HCT116 (cell line): ENCODE measurements at regions of chr14 and their contacts with region 1.

Region 1: GRCh38 chr14:75577729-75578101 is 705 bp upstream of the FLVCR2 start:
- DNase-seq: peak; percentile 65
- ATAC-seq: peak; percentile 94
- H3K4me3 ChIP-seq: peak overlapping the region; percentile 50 to 65
- H3K27ac ChIP-seq: 0 out of 2 replicates have a peak overlapping the region, but pooled peaks have one; percentile 4
- H3K4me1 ChIP-seq: peaks cover 9 to 19% of the 10 kb centered on the region in 2 experiments; a peak in 3 of 4 replicates
- H3K27me3 ChIP-seq: 0 out of 2 replicates have a peak, but pooled peaks cover 7% of the 10 kb centered on the region
- CTCF ChIP-seq: peak; percentile 71 to 78 (median 78)
- POLR2A ChIP-seq: no peak
- RAD21 ChIP-seq: peak; percentile 87

Region 2: GRCh38 chr14:75560962-75561432 is 16.7 kb before region 1 on chr14:
- CTCF ChIA-PET with region 1: interaction called, 15 read pairs
- POLR2A ChIA-PET with region 1: no interaction called
- RAD21 ChIA-PET with region 1: interaction called in 1 of 2 experiments, 3 read pairs
- intact Hi-C with region 1: no loop called
- DNase-seq: peak; percentile 63
- ATAC-seq: peak; percentile 99
- H3K4me3 ChIP-seq: no peak overlapping the region
- H3K27ac ChIP-seq: no peak overlapping the region
- H3K4me1 ChIP-seq: peaks cover 8 to 14% of the 10 kb centered on the region in 2 experiments; a peak in 3 of 4 replicates
- H3K27me3 ChIP-seq: no peaks in the 10 kb centered on the region
- CTCF ChIP-seq: peak; percentile 78 to 89 (median 89)
- POLR2A ChIP-seq: no peak
- RAD21 ChIP-seq: peak; percentile 87

Region 3: GRCh38 chr14:75654127-75654732 is 76.5 kb after region 1 on chr14:
- CTCF ChIA-PET with region 1: interaction called, 84 read pairs
- POLR2A ChIA-PET with region 1: interaction called, 4 read pairs
- RAD21 ChIA-PET with region 1: interaction called, 9 read pairs
- intact Hi-C with region 1: loop called (anchors 1 kb)
- DNase-seq: peak; percentile 44
- ATAC-seq: peak; percentile 99
- H3K4me3 ChIP-seq: no peak overlapping the region
- H3K27ac ChIP-seq: no peak overlapping the region
- H3K4me1 ChIP-seq: peaks cover 0 to 5% of the 10 kb centered on the region in 2 experiments; a peak in 2 of 4 replicates
- H3K27me3 ChIP-seq: no peaks in the 10 kb centered on the region
- CTCF ChIP-seq: peak; percentile 85 to 99 (median 97)
- POLR2A ChIP-seq: no peak
- RAD21 ChIP-seq: peak; percentile 85

Region 4: DNA sequence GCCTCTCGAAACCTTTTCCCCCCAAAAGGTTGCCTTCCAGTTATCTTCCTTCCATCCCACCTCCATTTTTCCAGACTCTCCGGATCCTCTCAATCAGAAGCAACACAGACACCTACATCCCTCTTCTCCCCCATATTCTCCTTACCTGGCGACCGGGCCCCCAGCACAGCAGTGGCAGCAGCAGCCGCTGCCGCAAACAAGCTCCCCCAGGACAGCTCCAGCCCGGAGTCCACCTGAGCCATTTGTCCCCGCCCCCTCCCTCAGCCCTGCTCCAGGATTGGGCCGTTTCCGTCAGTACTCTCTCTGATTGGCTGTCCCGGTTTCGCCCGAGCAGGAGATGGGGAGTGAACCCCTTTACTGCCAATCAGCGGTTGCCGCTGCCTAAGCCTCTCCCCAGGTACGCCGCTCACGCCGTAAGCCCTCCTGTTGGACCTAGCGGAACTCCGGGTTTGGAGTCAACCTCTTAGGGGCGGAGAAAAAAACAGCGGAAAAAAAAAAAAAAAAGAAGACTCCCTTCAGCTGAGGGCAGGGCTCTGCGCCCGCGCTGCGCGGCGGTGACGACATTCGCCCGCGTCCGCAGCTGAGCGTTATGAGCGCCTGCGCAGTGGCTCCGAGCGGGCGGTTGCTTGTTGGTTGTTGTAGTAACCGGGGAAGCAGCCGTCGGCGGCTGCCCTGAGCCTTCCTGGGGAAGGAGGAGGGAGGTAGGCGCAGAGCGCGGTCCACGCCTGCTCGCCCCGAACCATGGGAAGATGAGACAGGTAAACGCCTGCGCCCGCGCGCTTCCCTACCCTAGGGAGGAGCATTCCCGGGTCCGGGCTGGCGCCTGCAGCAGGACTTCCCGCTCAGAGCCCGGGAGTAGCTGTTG is 83.1 kb after region 1 on chr14 and contains the starts of genes ERG28 and TTLL5:
- CTCF ChIA-PET with region 1: interaction called, 84 read pairs
- POLR2A ChIA-PET with region 1: no interaction called
- RAD21 ChIA-PET with region 1: interaction called, 3 to 6 read pairs
- intact Hi-C with region 1: no loop called
- DNase-seq: peak; percentile 99
- ATAC-seq: peak; percentile 97
- H3K4me3 ChIP-seq: peak within 1 kb of the TSS; percentile 82 to 91
- H3K27ac ChIP-seq: peak within 1 kb of the TSS; percentile 74
- H3K4me1 ChIP-seq: peaks cover 3 to 10% of the 10 kb centered on the region in 2 experiments; a peak in 2 of 4 replicates
- H3K27me3 ChIP-seq: no peaks in the 10 kb centered on the region
- CTCF ChIP-seq: no peak
- POLR2A ChIP-seq: peak; percentile 61
- RAD21 ChIP-seq: no peak
- total RNA-seq, gene ERG28: 18.4 TPM
- total RNA-seq, gene TTLL5: 26.2 TPM

Region 5: GRCh38 chr14:75709207-75709812 is 131.6 kb after region 1 on chr14:
- CTCF ChIA-PET with region 1: interaction called, 20 read pairs
- POLR2A ChIA-PET with region 1: no interaction called
- RAD21 ChIA-PET with region 1: interaction called in 1 of 2 experiments, 5 read pairs
- intact Hi-C with region 1: loop called (anchors 2 kb)
- DNase-seq: peak; percentile 68
- ATAC-seq: peak; percentile 58
- H3K4me3 ChIP-seq: no peak overlapping the region
- H3K27ac ChIP-seq: no peak overlapping the region
- H3K4me1 ChIP-seq: peaks cover 17 to 18% of the 10 kb centered on the region in 2 experiments
- H3K27me3 ChIP-seq: no peaks in the 10 kb centered on the region
- CTCF ChIP-seq: peak; percentile 68 to 89 (median 78)
- POLR2A ChIP-seq: no peak
- RAD21 ChIP-seq: peak; percentile 76

Region 6: DNA sequence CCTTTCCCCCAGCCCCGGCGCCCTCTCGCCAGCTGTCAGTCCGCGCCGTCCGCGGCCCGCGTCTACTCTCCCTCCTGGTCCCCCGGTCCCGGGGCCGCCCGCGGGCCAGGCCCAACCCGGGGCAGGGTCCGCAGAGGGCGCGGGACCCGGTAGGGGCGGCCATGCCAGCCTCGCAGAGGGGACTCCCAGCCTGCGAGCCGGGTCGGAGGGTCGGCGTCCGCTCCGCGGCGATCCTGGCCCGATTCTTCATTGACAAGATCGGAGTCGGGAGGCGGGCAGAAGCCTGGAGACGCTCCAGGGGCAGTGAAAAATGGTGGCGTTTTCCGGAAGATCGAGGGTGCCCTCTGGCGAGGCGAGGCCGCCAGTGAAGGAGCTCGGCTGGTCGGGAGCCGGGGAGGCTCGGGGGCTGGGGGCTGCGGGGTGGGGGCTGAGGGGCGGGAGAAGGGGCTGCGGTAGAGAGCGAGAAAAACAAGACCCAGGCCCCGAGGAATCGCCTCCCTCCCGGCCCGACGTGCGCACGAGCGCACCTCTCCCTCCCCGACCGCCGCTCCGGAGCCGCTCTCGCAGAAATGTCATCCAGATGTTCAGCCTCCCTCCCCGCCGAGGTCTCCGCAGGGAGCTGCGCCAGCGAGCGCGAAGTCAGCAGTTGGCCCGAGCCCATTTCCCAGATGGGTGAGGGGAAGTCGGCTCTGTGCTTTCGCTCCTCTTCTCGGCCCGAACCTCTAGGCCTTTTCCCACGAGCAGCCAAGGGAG is 404.7 kb after region 1 on chr14:
- CTCF ChIA-PET with region 1: interaction called, 10 read pairs
- POLR2A ChIA-PET with region 1: no interaction called
- RAD21 ChIA-PET with region 1: no interaction called
- intact Hi-C with region 1: loop called (anchors 1 kb)
- DNase-seq: peak; percentile 51
- ATAC-seq: peak; percentile 76
- H3K4me3 ChIP-seq: peak overlapping the region; percentile 53 to 86
- H3K27ac ChIP-seq: peak overlapping the region; percentile 42; the same call in 1 of the 2 replicates
- H3K4me1 ChIP-seq: peaks cover 12 to 27% of the 10 kb centered on the region in 2 experiments
- H3K27me3 ChIP-seq: no peaks in the 10 kb centered on the region
- CTCF ChIP-seq: peak; percentile 44 to 69 (median 52); a peak in 5 of 6 replicates
- POLR2A ChIP-seq: no peak
- RAD21 ChIP-seq: peak; percentile 83